Breast epithelium (tissue), 4 donors: ENCODE measurements at regions of chr6 and their contacts with region 1.

Region 1: GRCh38 chr6:115159733-115160132 is 816.9 kb upstream of the HS3ST5 start:
- DNase-seq: no peak
- H3K4me3 ChIP-seq: no peak overlapping the region
- H3K27ac ChIP-seq: no peak overlapping the region
- H3K4me1 ChIP-seq: no peaks in the 10 kb centered on the region
- H3K27me3 ChIP-seq: no peaks in the 10 kb centered on the region
- CTCF ChIP-seq: no peak
- POLR2A ChIP-seq: no peak

Region 2: GRCh38 chr6:115221198-115221597 is 61.5 kb after region 1 on chr6:
- intact Hi-C with region 1: loop called (anchors 2 kb)
- DNase-seq: no peak
- H3K4me3 ChIP-seq: no peak overlapping the region
- H3K27ac ChIP-seq: no peak overlapping the region
- H3K4me1 ChIP-seq: no peaks in the 10 kb centered on the region
- H3K27me3 ChIP-seq: no peaks in the 10 kb centered on the region
- CTCF ChIP-seq: no peak
- POLR2A ChIP-seq: no peak

Region 3: DNA sequence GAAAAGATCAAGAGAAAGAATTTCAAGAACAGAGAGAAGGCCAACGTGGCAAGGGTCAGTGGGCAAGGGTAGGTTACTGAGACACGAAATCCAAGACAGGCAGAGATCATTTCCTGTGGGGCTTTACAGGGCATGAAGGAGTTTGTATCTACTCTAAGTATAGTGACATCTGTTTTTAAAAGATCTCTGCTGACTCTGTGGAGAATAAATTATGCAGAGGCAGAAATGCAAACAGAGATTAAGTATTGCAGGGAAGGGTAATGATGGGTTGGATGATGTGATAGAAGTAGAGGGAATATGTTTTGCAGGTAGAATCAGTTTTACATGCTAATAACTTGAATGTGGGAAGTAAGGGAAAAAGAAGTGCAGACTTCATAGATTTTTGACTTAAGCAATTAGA is 657.4 kb after region 1 on chr6:
- intact Hi-C with region 1: no loop called
- DNase-seq: no peak
- H3K4me3 ChIP-seq: no peak overlapping the region
- H3K27ac ChIP-seq: no peak overlapping the region
- H3K4me1 ChIP-seq: no peaks in the 10 kb centered on the region
- H3K27me3 ChIP-seq: no peaks in the 10 kb centered on the region
- CTCF ChIP-seq: no peak
- POLR2A ChIP-seq: no peak